Natural killer cell (primary cell): ENCODE measurements at regions of chr10 and their contacts with region 1.

Region 1: GRCh38 chr10:11113156-11113555 is 95.5 kb downstream of the CELF2 start:
- DNase-seq: peak in 1 of 2 donors; percentile 80
- ATAC-seq: peak; percentile 86 to 99 (median 88)
- H3K4me3 ChIP-seq: no peak overlapping the region
- H3K4me3 Mint-ChIP-seq: peak overlapping the region; percentile 25
- H3K27ac ChIP-seq: no peak overlapping the region
- H3K27ac Mint-ChIP-seq: peak overlapping the region in 1 of 2 donors; percentile 83
- H3K4me1 ChIP-seq: peaks cover 3% of the 10 kb centered on the region
- H3K4me1 Mint-ChIP-seq: peaks cover 9 to 11% of the 10 kb centered on the region in 2 donors
- H3K27me3 ChIP-seq: no peaks in the 10 kb centered on the region
- H3K27me3 Mint-ChIP-seq: peaks cover 0 to 6% of the 10 kb centered on the region in 2 donors
- CTCF ChIP-seq: peak; percentile 84

Region 2: GRCh38 chr10:11145495-11145855 is 32.3 kb after region 1 on chr10:
- intact Hi-C with region 1: loop called (anchors 5 kb)
- DNase-seq: peak; percentile 49 to 88
- ATAC-seq: peak; percentile 63 to 87 (median 85)
- H3K4me3 ChIP-seq: no peak overlapping the region
- H3K4me3 Mint-ChIP-seq: peak overlapping the region; percentile 87
- H3K27ac ChIP-seq: peak overlapping the region; percentile 74
- H3K27ac Mint-ChIP-seq: peak overlapping the region; percentile 92 to 94
- H3K4me1 ChIP-seq: peaks cover 73% of the 10 kb centered on the region
- H3K4me1 Mint-ChIP-seq: peaks cover 93 to 97% of the 10 kb centered on the region in 2 donors
- H3K27me3 ChIP-seq: no peaks in the 10 kb centered on the region
- H3K27me3 Mint-ChIP-seq: no peaks in the 10 kb centered on the region
- CTCF ChIP-seq: no peak

Region 3: DNA sequence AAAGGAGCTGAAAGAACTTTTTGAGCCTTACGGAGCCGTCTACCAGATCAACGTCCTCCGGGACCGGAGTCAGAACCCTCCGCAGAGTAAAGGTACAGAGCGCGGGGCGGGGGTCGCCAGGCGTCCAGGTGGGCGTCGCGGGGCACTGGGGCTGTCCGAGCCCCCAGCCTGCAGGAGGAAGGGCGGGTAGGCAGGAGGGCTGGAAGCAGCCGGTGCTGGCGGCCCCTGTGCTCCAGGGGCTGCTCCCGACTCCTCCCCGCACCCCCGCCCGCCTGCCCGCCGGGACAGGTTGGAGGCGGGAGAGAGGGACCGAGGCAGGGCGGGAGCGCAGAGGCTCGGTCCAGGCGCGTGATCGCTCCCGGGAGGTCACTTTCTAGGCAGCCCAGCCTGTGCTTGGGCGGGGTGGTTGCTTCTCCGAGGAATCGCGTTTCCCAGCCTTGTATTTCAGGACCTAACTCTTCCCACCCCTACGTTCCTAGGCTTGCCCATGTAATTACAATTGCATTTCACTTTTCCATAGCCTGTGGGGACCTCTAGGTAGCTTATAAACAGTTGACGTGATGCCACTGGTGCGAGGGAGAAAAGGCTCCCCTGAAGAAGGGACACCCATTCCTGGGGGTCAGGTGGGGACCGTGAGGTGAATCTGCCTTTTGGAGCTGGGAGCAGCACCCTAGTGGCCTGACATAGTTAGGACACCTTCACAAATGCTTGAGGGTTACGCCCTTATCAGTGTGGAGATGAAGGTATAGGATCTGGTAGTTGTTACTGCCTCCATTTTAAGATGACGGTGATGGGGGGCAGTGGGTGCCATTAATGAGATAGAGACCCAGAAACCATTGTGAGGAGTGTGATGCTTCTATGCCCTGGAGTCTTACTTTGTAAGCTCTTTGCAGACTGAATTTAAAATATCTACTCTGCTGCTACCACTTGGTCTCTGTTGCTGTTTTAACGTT is 52.7 kb after region 1 on chr10:
- intact Hi-C with region 1: loop called (anchors 1 kb)
- DNase-seq: peak; percentile 53 to 90
- ATAC-seq: peak; percentile 52 to 68 (median 54)
- H3K4me3 ChIP-seq: peak overlapping the region; percentile 93
- H3K4me3 Mint-ChIP-seq: no peak overlapping the region
- H3K27ac ChIP-seq: peak overlapping the region; percentile 86
- H3K27ac Mint-ChIP-seq: no peak overlapping the region
- H3K4me1 ChIP-seq: peaks cover 54% of the 10 kb centered on the region
- H3K4me1 Mint-ChIP-seq: peaks cover 45 to 47% of the 10 kb centered on the region in 2 donors
- H3K27me3 ChIP-seq: no peaks in the 10 kb centered on the region
- H3K27me3 Mint-ChIP-seq: no peaks in the 10 kb centered on the region
- CTCF ChIP-seq: peak; percentile 71

Region 4: DNA sequence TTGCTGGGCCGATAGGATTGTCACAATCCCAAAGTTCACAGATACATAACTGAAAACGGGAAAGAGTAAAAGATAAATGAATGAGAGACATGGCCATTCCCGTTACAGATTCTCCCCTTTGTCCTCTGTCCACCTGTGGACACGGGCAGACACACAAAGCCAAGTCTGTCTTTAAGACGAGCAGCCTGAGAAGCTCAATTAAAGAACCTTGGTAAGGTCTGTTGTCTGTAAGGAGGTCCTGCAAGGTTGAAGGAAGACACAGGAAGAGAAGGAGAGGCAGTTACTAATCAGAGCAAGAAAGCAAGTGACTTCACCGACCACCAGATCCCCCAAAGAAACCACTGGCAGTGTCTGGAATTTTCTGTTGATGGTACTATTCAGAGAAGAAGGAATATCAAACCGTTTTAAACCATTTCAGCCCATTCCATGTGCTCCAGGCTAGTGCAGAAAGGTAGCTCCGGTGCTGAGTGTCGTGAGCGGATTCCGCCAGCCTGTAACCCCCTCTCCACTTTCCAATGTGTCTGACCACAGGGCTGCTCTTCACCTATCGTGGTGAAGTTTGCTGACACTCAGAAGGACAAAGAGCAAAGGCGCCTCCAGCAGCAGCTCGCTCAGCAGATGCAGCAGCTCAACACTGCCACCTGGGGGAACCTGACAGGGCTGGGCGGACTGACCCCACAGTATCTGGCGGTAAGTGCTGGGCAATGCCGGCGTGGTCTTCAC is 157.1 kb after region 1 on chr10:
- intact Hi-C with region 1: loop called (anchors 1 kb)
- DNase-seq: peak; percentile 74 to 82
- ATAC-seq: peak; percentile 92 to 94 (median 93)
- H3K4me3 ChIP-seq: no peak overlapping the region
- H3K4me3 Mint-ChIP-seq: peak overlapping the region; percentile 55
- H3K27ac ChIP-seq: peak overlapping the region; percentile 40
- H3K27ac Mint-ChIP-seq: peak overlapping the region in 1 of 2 donors; percentile 86
- H3K4me1 ChIP-seq: peaks cover 18% of the 10 kb centered on the region
- H3K4me1 Mint-ChIP-seq: peaks cover 69 to 87% of the 10 kb centered on the region in 2 donors
- H3K27me3 ChIP-seq: no peaks in the 10 kb centered on the region
- H3K27me3 Mint-ChIP-seq: no peaks in the 10 kb centered on the region
- CTCF ChIP-seq: peak; percentile 94

Region 5: GRCh38 chr10:11472158-11472753 is 359.1 kb after region 1 on chr10:
- intact Hi-C with region 1: loop called (anchors 1 kb)
- DNase-seq: peak; percentile 48 to 84
- ATAC-seq: peak; percentile 80 to 98 (median 96)
- H3K4me3 ChIP-seq: no peak overlapping the region
- H3K4me3 Mint-ChIP-seq: no peak overlapping the region
- H3K27ac ChIP-seq: no peak overlapping the region
- H3K27ac Mint-ChIP-seq: no peak overlapping the region
- H3K4me1 ChIP-seq: no peaks in the 10 kb centered on the region
- H3K4me1 Mint-ChIP-seq: no peaks in the 10 kb centered on the region
- H3K27me3 ChIP-seq: no peaks in the 10 kb centered on the region
- H3K27me3 Mint-ChIP-seq: no peaks in the 10 kb centered on the region
- CTCF ChIP-seq: peak; percentile 99